Head of caudate nucleus (tissue), 42 donors: ENCODE measurements at regions of chr5 and their contacts with region 1.

Region 1: DNA sequence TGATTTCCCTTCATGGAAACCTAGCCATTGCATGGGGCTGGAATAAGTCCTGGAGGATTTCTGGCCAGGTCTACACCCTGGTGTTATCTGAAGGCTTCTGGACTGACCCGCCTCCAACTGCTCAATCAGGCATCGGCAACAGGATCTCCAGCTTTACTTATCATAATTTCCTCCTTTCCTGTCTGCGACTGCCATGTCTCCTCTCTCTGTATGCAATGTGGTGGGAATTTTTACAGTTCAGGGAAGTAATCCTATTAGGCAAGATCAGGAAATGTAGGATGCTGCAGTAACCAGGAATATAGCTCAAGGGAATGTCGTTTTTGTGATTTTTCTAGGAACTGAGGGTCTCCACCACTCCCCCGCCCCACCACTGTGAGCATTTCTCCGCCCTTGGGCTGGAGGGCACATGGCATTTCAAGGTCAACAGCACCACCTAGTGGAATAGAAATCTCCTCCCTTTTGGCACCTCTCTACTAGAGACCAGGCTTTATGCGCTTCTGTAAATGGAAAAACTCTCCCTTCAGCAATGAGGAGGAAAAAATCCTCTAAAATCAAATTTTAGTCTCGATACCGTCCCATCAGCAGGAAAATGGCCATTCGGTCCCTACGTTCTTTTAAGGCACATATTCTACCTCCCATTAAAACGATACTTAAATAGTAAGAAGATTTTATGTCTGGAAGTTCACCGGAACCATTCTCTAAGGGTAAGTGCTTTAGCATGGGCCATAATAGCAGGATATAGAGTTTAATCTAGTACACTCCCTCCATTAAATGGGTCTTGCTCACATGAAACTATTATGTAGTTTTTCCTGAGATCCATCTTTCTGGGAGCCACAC is 93.0 kb downstream of the YTHDC2 start:
- DNase-seq: peak in 41 of 42 donors; percentile 20 to 82 (median 62)

Region 2: GRCh38 chr5:112995764-112996618 is 610.5 kb before region 1 on chr5:
- intact Hi-C with region 1: loop called (anchors 2 kb)
- DNase-seq: peak; percentile 44 to 92 (median 80)

Region 3: DNA sequence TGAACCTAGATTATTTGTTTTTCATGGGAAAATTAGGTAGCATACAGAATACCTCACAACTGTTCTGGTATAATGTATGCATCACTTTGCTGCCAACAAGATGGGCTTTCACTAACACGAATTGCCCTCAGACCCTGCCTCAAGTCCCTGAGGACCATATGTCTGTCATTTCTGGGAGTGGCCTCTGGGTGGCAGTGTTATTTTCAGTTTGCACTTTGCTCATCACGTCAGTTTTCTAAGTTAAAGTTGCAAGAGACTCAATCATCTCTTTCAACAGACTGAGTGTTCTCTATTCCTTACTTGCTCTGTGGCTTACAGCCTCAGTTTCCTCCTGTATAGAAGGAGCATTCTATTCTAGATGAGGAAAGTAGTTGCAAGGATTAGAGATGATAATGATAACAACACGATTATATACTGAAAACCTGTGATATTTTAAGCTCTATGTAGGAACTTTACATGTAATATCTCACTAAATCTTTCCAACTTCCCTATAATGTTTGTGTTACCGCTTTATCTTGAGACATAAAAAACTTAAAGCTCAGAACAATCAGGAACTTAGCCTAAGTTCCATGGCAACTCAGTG is 227.5 kb before region 1 on chr5:
- intact Hi-C with region 1: loop called (anchors 5 kb)
- DNase-seq: peak in 41 of 42 donors; percentile 16 to 87 (median 64)

Region 4: GRCh38 chr5:113562828-113563400 is 43.6 kb before region 1 on chr5:
- intact Hi-C with region 1: no loop called
- DNase-seq: no peak

Region 5: GRCh38 chr5:113641715-113642114 is 35.2 kb after region 1 on chr5:
- intact Hi-C with region 1: no loop called
- DNase-seq: no peak